Naive thymus-derived CD8-positive, alpha-beta T cell (primary cell): ENCODE measurements at regions of chr14 and their contacts with region 1.

Region 1: DNA sequence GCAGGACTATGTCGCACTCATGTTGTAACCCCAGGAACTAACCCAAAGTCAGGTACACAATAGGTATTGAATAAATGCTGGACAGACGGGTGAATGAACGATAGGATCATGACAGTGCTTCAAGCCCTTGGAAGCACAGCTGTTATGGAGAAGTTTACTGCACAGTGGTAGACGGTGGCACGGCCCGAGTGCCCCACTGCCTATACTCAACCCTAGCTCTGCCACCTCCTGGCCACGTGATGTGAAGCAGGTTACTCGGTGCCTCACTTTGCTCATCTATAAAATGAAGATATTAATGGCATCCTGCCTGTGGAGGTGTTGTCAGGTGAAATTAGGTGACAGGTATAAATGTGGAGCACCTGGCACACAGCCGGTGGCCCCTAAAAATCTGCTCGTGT is 5.8 kb downstream of the ASB2 start:
- DNase-seq: peak; percentile 39 to 83 (median 60)
- ATAC-seq: peak; percentile 96
- H3K4me3 Mint-ChIP-seq: peak overlapping the region; percentile 80 to 93 (median 88)
- H3K27ac Mint-ChIP-seq: peak overlapping the region; percentile 22 to 90 (median 72)
- H3K4me1 Mint-ChIP-seq: peaks cover 8 to 57% (median 23%) of the 10 kb centered on the region in 4 donors
- H3K27me3 Mint-ChIP-seq: peaks cover 0 to 8% (median under 1%) of the 10 kb centered on the region in 5 donors

Region 2: DNA sequence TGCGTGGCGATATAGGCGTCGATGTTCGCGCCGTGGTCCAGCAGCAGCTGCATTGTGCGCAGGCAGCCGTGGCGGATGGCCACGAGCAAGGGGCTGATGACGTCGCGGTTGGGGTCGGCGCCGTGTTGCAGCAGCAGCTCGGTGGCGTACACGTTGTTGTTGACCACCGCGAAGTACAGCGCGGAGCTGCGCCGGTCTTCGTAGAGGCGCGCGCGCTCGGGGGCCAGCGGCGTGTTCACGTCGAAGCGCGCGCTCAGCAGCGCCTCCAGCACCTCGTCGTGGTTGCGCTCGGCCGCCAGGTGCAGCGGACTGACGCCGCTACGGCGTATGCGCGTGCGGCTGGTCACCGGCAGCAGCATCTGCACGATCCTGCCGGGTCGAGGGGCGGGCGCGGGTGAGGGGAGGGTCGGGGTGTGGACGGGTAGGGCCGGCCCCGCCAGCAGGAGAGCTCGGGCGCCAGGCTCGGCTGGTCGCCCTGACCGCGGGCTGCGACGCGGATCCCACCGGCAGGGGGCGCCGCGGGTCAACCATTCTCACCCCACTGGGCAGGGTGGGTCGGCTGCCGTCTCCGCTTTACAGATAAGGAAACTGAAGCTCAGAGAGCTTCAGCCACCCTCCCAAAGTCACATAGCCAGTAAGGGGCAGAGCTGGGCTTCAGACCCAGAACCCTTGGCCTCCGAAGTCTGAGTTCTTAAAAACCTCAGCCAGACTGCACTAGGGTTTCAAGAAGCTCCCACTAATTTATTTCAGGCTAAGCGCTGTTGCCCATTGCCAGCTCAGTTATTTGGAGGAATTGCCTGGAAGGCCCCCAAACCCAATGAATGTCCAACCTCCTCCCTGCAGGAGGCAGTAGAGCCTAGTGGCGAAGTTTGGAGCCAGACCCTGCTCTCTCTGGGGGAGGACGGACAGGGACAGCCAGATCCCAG is 31.0 kb before region 1 on chr14:
- POLR2A ChIA-PET with region 1: interaction called, 25 read pairs
- DNase-seq: peak; percentile 74 to 93 (median 88)
- ATAC-seq: peak; percentile 96 to 99
- H3K4me3 Mint-ChIP-seq: peak overlapping the region; percentile 39 to 81 (median 62)
- H3K27ac Mint-ChIP-seq: no peak overlapping the region
- H3K4me1 Mint-ChIP-seq: peaks cover 0 to 12% (median 3%) of the 10 kb centered on the region in 4 donors
- H3K27me3 Mint-ChIP-seq: peaks cover 5 to 22% (median 11%) of the 10 kb centered on the region in 5 donors

Region 3: DNA sequence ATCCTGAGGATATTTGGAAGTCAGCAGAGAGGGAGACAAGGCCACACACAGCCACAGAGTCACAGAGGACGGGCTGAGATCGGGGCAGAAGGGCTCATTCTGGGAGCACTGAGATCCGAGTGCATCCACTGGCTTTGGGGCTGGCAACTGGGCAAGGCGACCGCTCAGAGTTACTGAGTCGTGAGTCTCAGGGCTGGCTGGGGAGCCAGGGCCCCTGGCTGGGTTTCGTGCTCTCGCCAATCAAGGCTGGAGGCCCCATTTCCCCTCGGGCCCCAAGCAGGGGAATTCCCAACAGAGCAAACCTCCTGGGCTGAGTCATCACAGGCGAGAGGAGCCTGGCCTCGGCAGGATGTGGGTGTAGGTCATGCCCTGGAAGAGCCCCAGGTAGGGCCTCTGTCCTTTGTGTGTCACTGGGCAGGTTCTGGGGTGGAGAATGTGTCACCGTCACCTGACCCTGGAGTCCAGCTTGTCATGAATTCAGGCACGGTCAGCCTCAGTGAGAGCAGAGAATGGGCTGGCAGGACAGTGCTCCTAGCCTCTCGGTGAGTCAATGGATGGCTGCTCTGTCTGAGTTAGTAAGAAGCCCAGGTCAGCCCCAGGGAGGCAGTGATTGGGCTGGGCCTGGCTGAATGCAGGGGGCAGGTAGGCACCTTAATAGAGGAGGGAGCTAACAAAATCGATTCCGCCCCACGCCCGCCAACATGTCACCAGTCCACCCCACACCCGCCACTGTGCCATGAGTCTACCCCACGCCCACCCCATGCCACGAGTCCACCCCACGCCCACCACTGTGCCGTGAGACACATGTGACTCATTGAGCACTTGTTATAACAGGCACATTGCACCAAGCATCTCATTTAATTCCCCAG is 11.1 kb before region 1 on chr14:
- POLR2A ChIA-PET with region 1: interaction called, 12 read pairs
- DNase-seq: peak; percentile 64 to 92 (median 81)
- ATAC-seq: peak; percentile 87 to 89
- H3K4me3 Mint-ChIP-seq: peak overlapping the region; percentile 47 to 83 (median 74)
- H3K27ac Mint-ChIP-seq: peak overlapping the region; percentile 79 to 96 (median 86)
- H3K4me1 Mint-ChIP-seq: peaks cover 56 to 96% (median 88%) of the 10 kb centered on the region in 4 donors
- H3K27me3 Mint-ChIP-seq: peaks cover 0 to 3% (median 0%) of the 10 kb centered on the region in 5 donors